Heart left ventricle (tissue), 16 donors: ENCODE measurements at regions of chr5 and their contacts with region 1.

Region 1: GRCh38 chr5:81808106-81808505 is 57.2 kb upstream of the SSBP2 start:
- DNase-seq: no peak
- ATAC-seq: no peak
- H3K4me3 ChIP-seq: no peak overlapping the region
- H3K27ac ChIP-seq: no peak overlapping the region
- H3K4me1 ChIP-seq: no peaks in the 10 kb centered on the region
- H3K27me3 ChIP-seq: no peaks in the 10 kb centered on the region
- CTCF ChIP-seq: no peak
- POLR2A ChIP-seq: no peak

Region 2: DNA sequence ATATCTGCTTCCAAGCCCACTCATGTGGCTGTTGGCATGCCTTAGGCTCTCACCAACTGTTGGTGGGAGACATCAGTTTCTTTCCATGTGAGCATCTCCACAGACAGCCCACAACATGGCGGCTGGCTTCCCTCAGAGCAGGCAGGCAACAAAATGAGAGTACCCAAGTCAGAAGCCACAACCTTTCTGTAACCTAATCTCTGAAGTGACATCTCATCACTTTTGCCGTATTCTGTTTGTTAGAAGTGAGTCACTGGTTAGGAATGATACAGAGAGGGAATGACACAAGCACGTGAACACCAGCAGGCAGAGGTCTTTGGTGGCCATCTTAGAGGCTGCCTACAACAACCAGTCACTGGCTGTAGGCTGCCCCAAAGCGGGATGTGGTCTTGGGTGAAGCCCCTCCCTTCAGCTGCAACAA is 936.6 kb before region 1 on chr5:
- intact Hi-C with region 1: no loop called
- DNase-seq: no peak
- ATAC-seq: peak in 1 of 4 donors; percentile 41
- H3K4me3 ChIP-seq: no peak overlapping the region
- H3K27ac ChIP-seq: no peak overlapping the region
- H3K4me1 ChIP-seq: peaks cover 0 to 9% (median 0%) of the 10 kb centered on the region in 12 donors
- H3K27me3 ChIP-seq: no peaks in the 10 kb centered on the region
- CTCF ChIP-seq: no peak
- POLR2A ChIP-seq: no peak

Region 3: GRCh38 chr5:81826128-81826527 is 18.0 kb after region 1 on chr5:
- intact Hi-C with region 1: loop called in 1 of 10 experiments (anchors 1 kb)
- DNase-seq: no peak
- ATAC-seq: no peak
- H3K4me3 ChIP-seq: no peak overlapping the region
- H3K27ac ChIP-seq: no peak overlapping the region
- H3K4me1 ChIP-seq: peaks cover 0 to 13% (median 4%) of the 10 kb centered on the region in 12 donors
- H3K27me3 ChIP-seq: no peaks in the 10 kb centered on the region
- CTCF ChIP-seq: no peak
- POLR2A ChIP-seq: no peak

Region 4: DNA sequence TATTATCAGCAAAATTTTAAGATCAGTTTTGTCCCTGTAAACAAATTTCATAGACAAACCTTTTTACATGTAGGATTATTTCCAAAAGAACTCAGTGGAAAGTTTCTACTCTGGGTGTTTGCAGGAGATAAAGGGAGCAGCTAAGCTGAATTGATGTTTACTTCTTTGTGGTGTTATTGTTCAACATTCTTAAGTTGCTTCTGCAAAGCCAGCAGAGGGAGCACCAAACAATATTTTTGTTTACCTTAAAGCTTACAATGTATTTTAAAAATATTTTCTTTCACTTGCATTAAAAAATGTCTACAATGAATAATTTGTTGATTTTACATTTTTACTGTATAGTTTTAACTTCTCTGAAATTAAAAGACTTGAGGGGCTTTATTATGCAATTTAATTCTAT is 299.2 kb after region 1 on chr5:
- intact Hi-C with region 1: no loop called
- DNase-seq: no peak
- ATAC-seq: no peak
- H3K4me3 ChIP-seq: no peak overlapping the region
- H3K27ac ChIP-seq: peak overlapping the region in 1 of 12 donors; percentile 46
- H3K4me1 ChIP-seq: peaks cover 0 to 25% (median 16%) of the 10 kb centered on the region in 12 donors
- H3K27me3 ChIP-seq: no peaks in the 10 kb centered on the region
- CTCF ChIP-seq: peak in 10 of 12 donors; percentile 15 to 61 (median 46)
- POLR2A ChIP-seq: no peak